Caco-2 (cell line): ENCODE measurements at regions of chr3 and their contacts with region 1.

Region 1: DNA sequence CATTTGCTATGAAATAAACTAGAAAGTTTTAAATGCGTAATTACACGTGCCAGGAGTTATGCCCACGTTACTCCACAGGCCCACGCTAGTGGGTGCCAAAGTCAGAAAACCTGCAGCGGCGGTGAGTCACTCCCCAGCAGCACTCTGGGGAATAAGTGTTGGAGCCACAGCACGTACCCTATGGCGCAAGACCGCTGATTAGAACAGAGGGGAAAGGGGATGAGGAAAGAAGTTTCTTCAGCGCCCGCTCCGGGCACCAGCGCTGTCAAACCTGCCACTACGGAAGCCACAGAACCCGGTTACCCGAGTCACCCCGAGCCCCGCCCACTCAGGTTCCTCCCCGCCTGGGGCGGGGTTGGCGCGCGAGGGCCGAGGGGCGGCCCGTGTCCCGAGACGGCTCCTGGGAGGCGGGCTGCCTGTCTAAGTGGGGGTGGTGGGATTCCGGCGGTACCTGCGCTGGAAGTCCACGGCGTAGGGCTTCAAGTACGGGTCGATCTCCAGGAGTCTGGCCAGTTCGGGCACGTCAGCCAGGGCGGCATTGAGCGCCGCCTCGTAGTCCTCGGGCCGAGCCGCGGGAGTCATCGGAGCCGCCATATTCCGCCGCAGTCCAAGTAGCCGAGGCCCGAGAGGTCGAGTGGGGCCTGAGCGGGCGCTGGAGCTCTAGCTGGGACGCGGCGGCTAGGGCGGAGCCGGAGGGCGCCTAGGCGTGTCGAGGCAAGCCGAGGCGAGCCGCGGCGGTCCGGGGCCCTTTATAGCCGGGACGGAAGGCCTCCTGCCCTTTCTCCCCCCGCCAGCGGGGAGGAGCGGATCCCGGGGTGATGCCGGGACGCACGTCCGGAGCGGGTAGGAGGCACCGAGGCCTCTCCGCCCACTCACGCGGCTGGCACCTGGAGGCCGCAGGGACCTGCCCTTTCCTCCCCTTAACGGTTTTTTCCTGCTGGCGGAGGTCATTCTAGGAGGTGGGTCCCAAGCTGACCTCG is at the start of gene GBE1:
- DNase-seq: peak; percentile 90 to 94
- H3K4me3 ChIP-seq: peak within 1 kb of the TSS; percentile 86
- H3K4me3 Mint-ChIP-seq: peak within 1 kb of the TSS; percentile 82
- H3K27ac Mint-ChIP-seq: peak within 1 kb of the TSS; percentile 91
- H3K4me1 ChIP-seq: no peaks in the 10 kb centered on the region; the same call in 1 of the 2 replicates
- H3K4me1 Mint-ChIP-seq: peaks cover 5% of the 10 kb centered on the region
- H3K27me3 ChIP-seq: no peaks in the 10 kb centered on the region
- H3K27me3 Mint-ChIP-seq: no peaks in the 10 kb centered on the region
- CTCF ChIP-seq: peak in 1 of 2 experiments; percentile 20
- total RNA-seq, gene GBE1: 8.1 and 8.2 TPM in 2 replicates

Region 2: GRCh38 chr3:81716870-81717509 is 44.2 kb before region 1 on chr3:
- CTCF ChIA-PET with region 1: no interaction called
- POLR2A ChIA-PET with region 1: no interaction called
- intact Hi-C with region 1: loop called (anchors 2 kb)
- DNase-seq: no peak
- H3K4me3 ChIP-seq: no peak overlapping the region
- H3K4me3 Mint-ChIP-seq: no peak overlapping the region
- H3K27ac Mint-ChIP-seq: no peak overlapping the region
- H3K4me1 ChIP-seq: no peaks in the 10 kb centered on the region
- H3K4me1 Mint-ChIP-seq: peaks cover 7% of the 10 kb centered on the region
- H3K27me3 ChIP-seq: no peaks in the 10 kb centered on the region
- H3K27me3 Mint-ChIP-seq: no peaks in the 10 kb centered on the region
- CTCF ChIP-seq: no peak

Region 3: GRCh38 chr3:81799403-81799802 is 38.2 kb after region 1 on chr3:
- CTCF ChIA-PET with region 1: no interaction called
- POLR2A ChIA-PET with region 1: no interaction called
- intact Hi-C with region 1: no loop called
- DNase-seq: no peak
- H3K4me3 ChIP-seq: no peak overlapping the region
- H3K4me3 Mint-ChIP-seq: no peak overlapping the region
- H3K27ac Mint-ChIP-seq: no peak overlapping the region
- H3K4me1 ChIP-seq: no peaks in the 10 kb centered on the region
- H3K4me1 Mint-ChIP-seq: no peaks in the 10 kb centered on the region
- H3K27me3 ChIP-seq: no peaks in the 10 kb centered on the region
- H3K27me3 Mint-ChIP-seq: no peaks in the 10 kb centered on the region
- CTCF ChIP-seq: no peak

Region 4: GRCh38 chr3:82839871-82840270 is 1078.7 kb after region 1 on chr3:
- CTCF ChIA-PET with region 1: no interaction called
- POLR2A ChIA-PET with region 1: no interaction called
- intact Hi-C with region 1: no loop called
- DNase-seq: no peak
- H3K4me3 ChIP-seq: no peak overlapping the region
- H3K4me3 Mint-ChIP-seq: no peak overlapping the region
- H3K27ac Mint-ChIP-seq: no peak overlapping the region
- H3K4me1 ChIP-seq: no peaks in the 10 kb centered on the region
- H3K4me1 Mint-ChIP-seq: no peaks in the 10 kb centered on the region
- H3K27me3 ChIP-seq: no peaks in the 10 kb centered on the region
- H3K27me3 Mint-ChIP-seq: no peaks in the 10 kb centered on the region
- CTCF ChIP-seq: no peak